A549 (cell line): ENCODE measurements at regions of chr2 and their contacts with region 1.

Region 1: DNA sequence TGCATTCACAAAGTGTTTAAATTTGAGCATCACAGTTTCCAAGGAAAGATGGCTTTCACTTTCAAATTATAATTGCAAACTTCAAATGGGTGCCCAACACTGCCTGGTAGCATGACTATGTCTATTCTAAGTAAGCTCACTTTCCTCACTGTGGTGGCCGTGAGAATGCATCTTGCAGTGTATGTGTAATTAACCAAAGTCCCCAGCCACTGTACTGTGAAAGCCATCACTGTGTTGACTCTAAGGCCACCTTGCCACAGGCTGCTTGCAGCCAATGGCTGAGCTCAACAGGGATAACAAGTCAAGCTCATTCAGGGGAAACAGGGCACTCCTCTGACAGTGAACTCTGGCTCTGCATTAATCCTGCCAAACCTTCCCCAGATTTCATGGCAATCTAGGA is 43.3 kb upstream of the LGALSL start:
- DNase-seq: no peak
- ATAC-seq: peak; percentile 79 to 84
- H3K4me3 ChIP-seq: no peak overlapping the region
- H3K27ac ChIP-seq: no peak overlapping the region
- H3K4me1 ChIP-seq: peaks cover 10% of the 10 kb centered on the region; the same call in 2 of the 3 replicates
- CTCF ChIP-seq: no peak
- EP300 ChIP-seq: no peak
- POLR2A ChIP-seq: no peak
- RAD21 ChIP-seq: no peak

Region 2: GRCh38 chr2:64396551-64396950 is 14.1 kb before region 1 on chr2:
- CTCF ChIA-PET with region 1: interaction called, 14 read pairs
- POLR2A ChIA-PET with region 1: no interaction called
- DNase-seq: no peak
- ATAC-seq: no peak
- H3K4me3 ChIP-seq: no peak overlapping the region
- H3K27ac ChIP-seq: no peak overlapping the region
- H3K4me1 ChIP-seq: peaks cover 19% of the 10 kb centered on the region
- CTCF ChIP-seq: no peak
- EP300 ChIP-seq: no peak
- POLR2A ChIP-seq: no peak
- RAD21 ChIP-seq: no peak